ENCODE measurements at regions of chr14 and their contacts with region 1.

Region 1: DNA sequence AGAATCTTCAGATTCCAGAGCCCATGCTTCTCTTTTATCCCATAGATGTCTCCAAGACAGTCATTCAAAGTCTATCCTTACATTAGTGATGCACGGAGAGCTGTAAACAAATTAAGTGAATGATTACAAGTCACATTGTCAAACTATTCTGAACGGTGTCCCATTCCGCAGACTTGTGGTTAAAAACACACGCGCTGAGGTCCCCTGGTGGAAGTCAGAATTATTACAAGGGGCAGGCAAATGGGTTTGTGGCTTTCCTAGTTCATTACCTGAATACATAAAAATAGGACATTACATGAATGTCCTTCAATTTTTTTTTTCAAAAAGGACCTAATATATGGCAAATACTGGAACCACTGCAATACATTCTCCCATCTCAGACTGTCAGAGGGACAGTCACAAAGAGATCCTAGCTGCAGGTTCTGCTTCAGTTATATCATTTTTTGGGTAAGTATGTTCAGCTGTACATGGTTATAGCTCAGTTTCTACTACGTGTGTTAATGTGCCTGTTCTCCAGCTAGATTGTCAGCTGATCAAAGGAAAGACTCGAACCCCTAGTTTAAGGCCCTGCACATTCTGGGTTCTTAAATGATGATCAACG is 53.1 kb upstream of the STON2 start:
- DNase-seq: peak; percentile 61
- H3K4me3 Mint-ChIP-seq: no peak overlapping the region
- H3K27ac Mint-ChIP-seq: no peak overlapping the region
- H3K4me1 Mint-ChIP-seq: no peaks in the 10 kb centered on the region
- H3K27me3 Mint-ChIP-seq: peaks cover 5% of the 10 kb centered on the region

Region 2: DNA sequence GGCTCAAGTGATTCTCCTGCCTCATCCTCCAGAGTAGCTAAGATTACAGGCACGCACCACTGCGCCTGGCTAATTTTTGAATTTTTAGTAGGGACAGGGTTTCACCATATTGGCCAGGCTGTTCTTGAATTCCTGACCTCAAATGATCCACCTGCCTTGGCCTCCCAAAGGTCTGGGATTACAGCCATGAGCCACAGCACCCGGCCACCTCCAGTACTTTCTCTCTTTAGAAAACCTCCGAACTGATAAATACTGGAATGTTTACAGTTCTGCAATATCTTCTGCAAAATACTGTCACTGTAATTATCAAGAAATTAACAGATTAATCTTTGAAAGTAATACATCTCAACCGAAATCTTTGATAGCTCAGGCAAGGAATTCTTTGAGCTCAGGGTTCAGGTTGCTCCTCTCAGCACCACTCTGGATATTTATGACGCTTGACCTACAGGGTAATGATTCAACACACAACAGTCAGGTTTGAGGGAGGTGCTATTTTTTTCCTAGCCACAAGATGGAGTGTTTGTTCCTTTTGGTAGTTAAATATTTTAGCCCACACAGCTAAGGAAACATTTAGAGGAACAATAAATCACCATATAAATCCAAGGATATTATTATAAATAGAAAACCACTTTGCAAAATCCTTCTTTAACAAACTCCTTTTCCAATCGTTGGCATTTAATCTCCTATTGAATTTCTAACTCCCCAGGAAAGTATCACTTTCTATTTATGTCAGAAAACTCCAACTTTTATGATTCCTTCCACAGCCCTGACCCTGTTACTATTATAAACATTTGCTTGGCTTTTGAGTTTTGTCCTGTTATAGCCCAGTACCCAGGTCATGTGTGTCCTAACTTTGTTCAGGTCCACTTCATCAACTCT is 183.9 kb before region 1 on chr14:
- CTCF ChIA-PET with region 1: interaction called, 122 read pairs
- POLR2A ChIA-PET with region 1: no interaction called
- intact Hi-C with region 1: loop called (anchors 1 kb)
- DNase-seq: no peak
- H3K4me3 Mint-ChIP-seq: no peak overlapping the region
- H3K27ac Mint-ChIP-seq: no peak overlapping the region
- H3K4me1 Mint-ChIP-seq: no peaks in the 10 kb centered on the region
- H3K27me3 Mint-ChIP-seq: peaks cover 19% of the 10 kb centered on the region

Measured in activated CD4-positive, alpha-beta memory T cell treated with anti-CD3 and anti-CD28 coated beads for 36 hours (primary cell).